Activated CD4-positive, alpha-beta memory T cell treated with anti-CD3 and anti-CD28 coated beads for 36 hours (primary cell): ENCODE measurements at regions of chr7 and their contacts with region 1.

Region 1: DNA sequence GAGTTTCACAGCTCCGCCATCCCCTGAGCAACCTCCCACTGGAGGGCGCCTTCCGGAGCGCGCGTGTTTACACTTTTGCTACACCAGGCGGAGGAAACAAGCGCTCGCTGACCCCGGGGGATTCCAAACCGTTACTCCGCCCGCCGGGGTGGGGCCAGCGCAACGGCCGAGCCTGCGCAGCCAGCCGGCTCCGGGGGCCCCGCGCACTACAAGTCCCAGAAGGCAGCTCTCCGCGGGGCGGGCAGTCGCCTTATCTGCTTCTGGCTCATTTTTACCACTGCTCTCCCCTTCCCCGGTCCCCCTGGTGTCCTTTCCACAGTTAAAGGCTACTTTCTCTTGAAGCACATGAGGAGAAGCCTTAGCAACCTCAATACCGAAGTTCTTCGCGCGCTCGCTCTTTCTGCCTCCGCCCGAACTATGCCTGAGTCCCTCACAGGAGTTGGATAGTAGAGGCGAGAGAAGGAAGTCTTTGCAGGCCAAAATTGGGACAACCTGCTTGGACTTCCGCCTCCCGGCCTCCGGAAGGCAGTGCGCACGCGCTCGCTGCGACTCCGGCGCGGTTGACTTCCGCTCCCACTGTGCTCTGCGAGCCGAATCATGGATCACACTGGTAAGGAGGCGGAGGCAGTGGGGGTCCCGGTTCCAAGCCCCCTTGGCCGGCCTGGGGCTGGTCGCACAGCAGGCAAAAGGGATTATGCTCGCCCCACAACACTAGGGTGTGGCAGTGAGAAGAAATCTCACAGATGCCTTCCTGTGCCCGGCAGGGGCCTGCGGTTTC is at the start of gene CBLL1:
- DNase-seq: peak; percentile 99
- H3K4me3 Mint-ChIP-seq: peak within 1 kb of the TSS; percentile 97
- H3K27ac Mint-ChIP-seq: peak within 1 kb of the TSS; percentile 100
- H3K4me1 Mint-ChIP-seq: peaks cover 49% of the 10 kb centered on the region
- H3K27me3 Mint-ChIP-seq: no peaks in the 10 kb centered on the region
- total RNA-seq, gene CBLL1: 38.7 to 40.4 TPM

Region 2: GRCh38 chr7:107614425-107614824 is 129.3 kb before region 1 on chr7:
- CTCF ChIA-PET with region 1: no interaction called
- POLR2A ChIA-PET with region 1: no interaction called
- intact Hi-C with region 1: no loop called
- DNase-seq: no peak
- H3K4me3 Mint-ChIP-seq: no peak overlapping the region
- H3K27ac Mint-ChIP-seq: no peak overlapping the region
- H3K4me1 Mint-ChIP-seq: no peaks in the 10 kb centered on the region
- H3K27me3 Mint-ChIP-seq: no peaks in the 10 kb centered on the region

Region 3: GRCh38 chr7:107661081-107661864 is 82.5 kb before region 1 on chr7:
- CTCF ChIA-PET with region 1: interaction called, 8 read pairs
- POLR2A ChIA-PET with region 1: interaction called, 10 read pairs
- intact Hi-C with region 1: loop called (anchors 1 kb)
- DNase-seq: peak; percentile 70
- H3K4me3 Mint-ChIP-seq: peak overlapping the region; percentile 84
- H3K27ac Mint-ChIP-seq: peak overlapping the region; percentile 93
- H3K4me1 Mint-ChIP-seq: peaks cover 30% of the 10 kb centered on the region
- H3K27me3 Mint-ChIP-seq: peaks cover 11% of the 10 kb centered on the region

Region 4: GRCh38 chr7:107816011-107816566 is 72.3 kb after region 1 on chr7:
- CTCF ChIA-PET with region 1: interaction called, 3 read pairs
- POLR2A ChIA-PET with region 1: interaction called, 5 read pairs
- intact Hi-C with region 1: loop called (anchors 1 kb)
- DNase-seq: no peak
- H3K4me3 Mint-ChIP-seq: no peak overlapping the region
- H3K27ac Mint-ChIP-seq: peak overlapping the region; percentile 64
- H3K4me1 Mint-ChIP-seq: peaks cover 31% of the 10 kb centered on the region
- H3K27me3 Mint-ChIP-seq: no peaks in the 10 kb centered on the region

Region 5: GRCh38 chr7:107890962-107891635 is 147.3 kb after region 1 on chr7 and contains the start of gene DLD:
- CTCF ChIA-PET with region 1: interaction called, 11 read pairs
- POLR2A ChIA-PET with region 1: interaction called, 7 read pairs
- intact Hi-C with region 1: loop called (anchors 1 kb)
- DNase-seq: peak; percentile 97
- H3K4me3 Mint-ChIP-seq: peak within 1 kb of the TSS; percentile 89
- H3K27ac Mint-ChIP-seq: peak within 1 kb of the TSS; percentile 94
- H3K4me1 Mint-ChIP-seq: peaks cover 36% of the 10 kb centered on the region
- H3K27me3 Mint-ChIP-seq: no peaks in the 10 kb centered on the region
- total RNA-seq, gene DLD: 103 to 116 TPM